Heart right ventricle (tissue), 16 donors: ENCODE measurements at regions of chr9 and their contacts with region 1.

Region 1: GRCh38 chr9:97938081-97938644 is at the start of gene HEMGN:
- DNase-seq: no peak
- ATAC-seq: no peak
- H3K4me3 ChIP-seq: no peak within 1 kb of the TSS
- H3K27ac ChIP-seq: no peak within 1 kb of the TSS
- H3K4me1 ChIP-seq: no peaks in the 10 kb centered on the region
- H3K27me3 ChIP-seq: peaks cover 0 to 49% (median 24%) of the 10 kb centered on the region in 7 donors
- CTCF ChIP-seq: no peak
- total RNA-seq, gene HEMGN: 0.11 to 1.1 (median 0.19) TPM in 4 of 10 donors, not detected in the others

Region 2: GRCh38 chr9:98022447-98022846 is 84.3 kb after region 1 on chr9:
- intact Hi-C with region 1: loop called in 1 of 10 experiments (anchors 10 kb)
- DNase-seq: no peak
- ATAC-seq: peak in 1 of 8 donors; percentile 16
- H3K4me3 ChIP-seq: no peak overlapping the region
- H3K27ac ChIP-seq: peak overlapping the region in 9 of 10 donors; percentile 36 to 85 (median 70)
- H3K4me1 ChIP-seq: peaks cover 0 to 45% (median 19%) of the 10 kb centered on the region in 9 donors
- H3K27me3 ChIP-seq: no peaks in the 10 kb centered on the region
- CTCF ChIP-seq: no peak

Region 3: DNA sequence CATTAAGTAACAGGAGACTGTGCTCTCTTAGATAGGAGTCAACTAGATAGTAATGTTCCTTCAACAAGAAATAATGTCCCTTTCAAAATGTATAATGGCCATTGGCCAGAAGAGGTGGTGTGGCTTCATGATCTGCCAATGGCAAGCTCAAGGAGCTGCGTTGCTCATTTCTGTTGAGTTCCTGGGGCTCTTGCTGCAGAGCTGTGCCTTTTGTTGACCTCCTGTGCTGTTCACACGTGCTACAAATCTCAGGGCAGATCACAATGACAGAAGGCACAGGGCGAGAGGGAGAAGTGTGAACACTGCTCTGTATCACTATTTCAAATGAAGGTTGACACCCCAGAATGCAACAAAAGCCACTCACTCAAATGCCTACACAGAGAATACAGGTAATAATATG is 333.3 kb after region 1 on chr9:
- intact Hi-C with region 1: loop called in 1 of 10 experiments (anchors 5 kb)
- DNase-seq: no peak
- ATAC-seq: no peak
- H3K4me3 ChIP-seq: no peak overlapping the region
- H3K27ac ChIP-seq: no peak overlapping the region
- H3K4me1 ChIP-seq: no peaks in the 10 kb centered on the region
- H3K27me3 ChIP-seq: peaks cover 0 to 33% (median 10%) of the 10 kb centered on the region in 7 donors
- CTCF ChIP-seq: no peak